Aorta (tissue), 5 donors: ENCODE measurements at regions of chr17 and their contacts with region 1.

Region 1: GRCh38 chr17:75589012-75589918 is 1.7 kb downstream of the MYO15B start:
- DNase-seq: peak; percentile 97 to 99
- ATAC-seq: peak; percentile 94
- H3K4me3 ChIP-seq: peak overlapping the region; percentile 17 to 28
- H3K27ac ChIP-seq: peak overlapping the region in 1 of 2 donors; percentile 45
- H3K4me1 ChIP-seq: no peaks in the 10 kb centered on the region
- H3K27me3 ChIP-seq: no peaks in the 10 kb centered on the region

Region 2: GRCh38 chr17:75430159-75430974 is 158.9 kb before region 1 on chr17:
- intact Hi-C with region 1: loop called (anchors 2 to 5 kb)
- DNase-seq: peak; percentile 56 to 81
- ATAC-seq: peak; percentile 17
- H3K4me3 ChIP-seq: no peak overlapping the region
- H3K27ac ChIP-seq: peak overlapping the region; percentile 73 to 76
- H3K4me1 ChIP-seq: peaks cover 2 to 3% of the 10 kb centered on the region in 2 donors
- H3K27me3 ChIP-seq: no peaks in the 10 kb centered on the region